ENCODE measurements at regions of chr14 and their contacts with region 1.

Region 1: GRCh38 chr14:68816262-68816942 is 23.5 kb upstream of the ZFP36L1 start:
- DNase-seq: peak; percentile 96
- ATAC-seq: peak; percentile 74
- H3K4me3 Mint-ChIP-seq: peak overlapping the region; percentile 89
- H3K27ac Mint-ChIP-seq: peak overlapping the region; percentile 93
- H3K4me1 Mint-ChIP-seq: peaks cover 86% of the 10 kb centered on the region
- H3K27me3 Mint-ChIP-seq: no peaks in the 10 kb centered on the region
- CTCF ChIP-seq: peak; percentile 54

Region 2: DNA sequence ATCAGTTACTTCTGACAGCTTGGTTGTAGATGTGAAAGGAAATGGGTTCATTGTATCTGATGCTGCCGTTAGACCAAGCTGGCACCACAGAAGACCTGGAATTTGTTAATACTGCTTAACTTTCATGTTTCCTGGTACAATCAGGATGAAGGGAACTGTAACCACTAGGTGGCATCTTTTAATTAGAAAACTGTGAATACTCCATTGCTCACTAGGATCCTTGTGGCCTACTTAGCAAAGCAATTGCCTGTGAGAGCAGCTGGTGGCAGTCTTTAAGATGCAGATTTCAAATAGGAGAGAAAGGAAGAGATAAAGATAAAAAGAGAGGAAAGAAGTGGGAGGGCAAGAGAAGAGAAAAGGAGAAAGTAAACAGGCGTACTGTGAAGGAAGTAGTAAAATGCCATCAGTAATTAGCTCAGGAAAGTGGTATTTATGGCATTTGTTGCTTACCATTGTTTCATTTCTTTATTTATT is 882.4 kb before region 1 on chr14:
- CTCF ChIA-PET with region 1: interaction called, 8 read pairs
- POLR2A ChIA-PET with region 1: interaction called, 8 read pairs
- intact Hi-C with region 1: loop called (anchors 2 kb)
- DNase-seq: no peak
- ATAC-seq: peak; percentile 77
- H3K4me3 Mint-ChIP-seq: no peak overlapping the region
- H3K27ac Mint-ChIP-seq: no peak overlapping the region
- H3K4me1 Mint-ChIP-seq: peaks cover 4% of the 10 kb centered on the region
- H3K27me3 Mint-ChIP-seq: no peaks in the 10 kb centered on the region
- CTCF ChIP-seq: no peak

Region 3: GRCh38 chr14:68261092-68261842 is 555.1 kb before region 1 on chr14:
- CTCF ChIA-PET with region 1: interaction called, 3 read pairs
- POLR2A ChIA-PET with region 1: interaction called, 113 read pairs
- intact Hi-C with region 1: no loop called
- DNase-seq: no peak
- ATAC-seq: peak; percentile 56
- H3K4me3 Mint-ChIP-seq: peak overlapping the region; percentile 51
- H3K27ac Mint-ChIP-seq: peak overlapping the region; percentile 96
- H3K4me1 Mint-ChIP-seq: peaks cover 81% of the 10 kb centered on the region
- H3K27me3 Mint-ChIP-seq: no peaks in the 10 kb centered on the region
- CTCF ChIP-seq: no peak

Region 4: GRCh38 chr14:68312884-68313610 is 503.4 kb before region 1 on chr14:
- CTCF ChIA-PET with region 1: interaction called, 6 read pairs
- POLR2A ChIA-PET with region 1: interaction called, 27 read pairs
- intact Hi-C with region 1: loop called (anchors 1 kb)
- DNase-seq: no peak
- ATAC-seq: peak; percentile 84
- H3K4me3 Mint-ChIP-seq: peak overlapping the region; percentile 62
- H3K27ac Mint-ChIP-seq: peak overlapping the region; percentile 94
- H3K4me1 Mint-ChIP-seq: peaks cover 91% of the 10 kb centered on the region
- H3K27me3 Mint-ChIP-seq: no peaks in the 10 kb centered on the region
- CTCF ChIP-seq: no peak

Region 5: DNA sequence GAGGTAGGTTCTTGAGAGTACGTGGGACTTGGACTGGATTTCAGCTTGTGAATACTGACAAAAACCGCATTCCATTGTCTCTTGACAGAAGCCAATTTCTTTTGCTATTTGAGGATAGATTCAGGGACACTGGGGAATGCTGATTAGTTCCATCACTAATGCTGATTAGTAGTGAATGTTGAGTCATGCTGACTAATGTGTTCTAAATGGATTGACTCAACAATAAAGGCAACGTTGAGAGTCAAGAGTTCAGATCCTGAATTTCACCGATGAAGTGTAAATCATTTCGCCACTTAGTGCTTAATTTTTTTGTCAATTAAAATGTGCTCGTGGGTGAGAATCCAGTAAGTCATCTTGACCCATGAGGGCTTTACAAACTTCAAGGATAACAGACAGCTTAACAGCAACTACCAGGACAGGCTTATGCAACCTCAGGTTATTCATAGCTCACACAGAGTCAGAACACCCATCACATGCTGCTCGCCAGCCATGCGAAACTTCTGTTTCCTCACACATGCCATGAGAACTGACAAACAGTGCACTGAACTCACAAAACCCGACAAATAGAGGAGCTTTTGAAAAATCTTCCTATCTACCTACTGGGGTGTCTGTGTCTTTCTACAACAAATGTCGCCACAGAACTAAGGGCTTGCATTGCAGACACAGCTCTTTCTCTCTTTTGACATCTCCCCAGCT is 340.0 kb before region 1 on chr14:
- CTCF ChIA-PET with region 1: no interaction called
- POLR2A ChIA-PET with region 1: interaction called, 34 read pairs
- intact Hi-C with region 1: loop called (anchors 1 kb)
- DNase-seq: peak; percentile 40
- ATAC-seq: peak; percentile 83
- H3K4me3 Mint-ChIP-seq: peak overlapping the region; percentile 62
- H3K27ac Mint-ChIP-seq: peak overlapping the region; percentile 99
- H3K4me1 Mint-ChIP-seq: peaks cover 89% of the 10 kb centered on the region
- H3K27me3 Mint-ChIP-seq: no peaks in the 10 kb centered on the region
- CTCF ChIP-seq: no peak

Region 6: DNA sequence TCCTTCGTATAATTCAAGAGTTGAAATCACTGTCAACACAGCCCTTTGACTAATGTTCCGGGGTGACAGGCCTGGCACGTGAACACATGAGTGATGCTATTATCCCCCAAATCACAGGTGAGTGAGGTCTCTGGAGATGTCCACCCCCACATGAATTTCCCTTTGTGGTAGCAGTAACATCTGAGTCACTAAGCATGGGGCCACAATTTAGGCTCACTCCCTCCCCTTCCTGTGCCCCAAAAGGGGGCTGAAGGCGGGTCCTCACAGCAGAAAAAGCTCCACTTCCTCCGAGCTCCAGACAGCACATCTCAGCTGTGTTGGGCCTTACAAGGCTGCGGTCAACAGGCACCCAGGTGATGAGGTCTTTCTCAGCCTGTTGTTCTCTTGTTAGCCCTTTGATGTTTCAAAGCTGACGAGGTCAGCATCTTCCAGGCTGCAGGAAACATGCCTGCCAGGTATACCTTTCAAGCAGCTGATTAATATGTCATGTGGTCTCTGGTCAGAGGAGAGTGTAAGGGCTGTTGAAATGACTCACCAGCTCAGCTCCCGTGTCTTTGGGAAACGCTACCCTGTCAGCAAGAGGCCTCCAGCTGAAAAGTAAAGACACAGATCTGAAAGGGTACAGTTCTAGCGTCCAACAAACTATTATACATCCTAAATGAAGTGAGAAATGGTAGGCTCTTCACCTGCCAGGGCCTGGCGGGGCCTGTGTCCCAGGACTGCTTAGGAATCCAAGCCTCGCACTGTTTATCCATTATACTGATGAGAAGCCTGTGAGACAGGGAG is 130.8 kb before region 1 on chr14:
- CTCF ChIA-PET with region 1: interaction called, 10 read pairs
- POLR2A ChIA-PET with region 1: interaction called, 157 read pairs
- intact Hi-C with region 1: loop called (anchors 1 kb)
- DNase-seq: peak; percentile 65
- ATAC-seq: peak; percentile 76
- H3K4me3 Mint-ChIP-seq: peak overlapping the region; percentile 73
- H3K27ac Mint-ChIP-seq: peak overlapping the region; percentile 97
- H3K4me1 Mint-ChIP-seq: peaks cover 87% of the 10 kb centered on the region
- H3K27me3 Mint-ChIP-seq: no peaks in the 10 kb centered on the region
- CTCF ChIP-seq: no peak